ENCODE measurements at regions of chr12 and their contacts with region 1.

Region 1: DNA sequence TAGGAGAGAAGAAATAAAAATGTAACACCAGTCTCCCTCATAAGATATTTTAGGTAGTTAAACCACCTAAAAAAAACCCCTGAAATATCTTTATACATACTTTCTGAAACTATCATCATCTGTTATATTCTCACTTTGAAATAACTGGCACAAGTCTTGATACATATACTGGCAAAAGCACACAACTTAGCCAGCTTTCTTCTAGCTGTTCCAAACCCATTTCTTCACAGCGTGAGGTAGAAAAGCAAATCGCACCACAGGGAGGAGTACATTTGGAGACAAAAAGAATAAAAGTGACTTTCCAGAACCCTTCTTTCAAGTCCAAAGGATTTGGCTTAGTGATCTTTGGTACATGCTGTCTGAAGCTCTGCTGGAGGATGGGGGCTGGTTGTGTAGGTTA is 78.5 kb downstream of the RERG start:
- DNase-seq: no peak
- H3K4me3 ChIP-seq: no peak overlapping the region
- H3K27ac ChIP-seq: no peak overlapping the region
- H3K4me1 ChIP-seq: no peaks in the 10 kb centered on the region
- H3K27me3 ChIP-seq: no peaks in the 10 kb centered on the region
- CTCF ChIP-seq: no peak

Region 2: GRCh38 chr12:14989790-14990189 is 152.9 kb before region 1 on chr12:
- CTCF ChIA-PET with region 1: no interaction called
- POLR2A ChIA-PET with region 1: no interaction called
- intact Hi-C with region 1: no loop called
- DNase-seq: no peak
- H3K4me3 ChIP-seq: no peak overlapping the region
- H3K27ac ChIP-seq: no peak overlapping the region
- H3K4me1 ChIP-seq: no peaks in the 10 kb centered on the region
- H3K27me3 ChIP-seq: no peaks in the 10 kb centered on the region
- CTCF ChIP-seq: no peak

Region 3: DNA sequence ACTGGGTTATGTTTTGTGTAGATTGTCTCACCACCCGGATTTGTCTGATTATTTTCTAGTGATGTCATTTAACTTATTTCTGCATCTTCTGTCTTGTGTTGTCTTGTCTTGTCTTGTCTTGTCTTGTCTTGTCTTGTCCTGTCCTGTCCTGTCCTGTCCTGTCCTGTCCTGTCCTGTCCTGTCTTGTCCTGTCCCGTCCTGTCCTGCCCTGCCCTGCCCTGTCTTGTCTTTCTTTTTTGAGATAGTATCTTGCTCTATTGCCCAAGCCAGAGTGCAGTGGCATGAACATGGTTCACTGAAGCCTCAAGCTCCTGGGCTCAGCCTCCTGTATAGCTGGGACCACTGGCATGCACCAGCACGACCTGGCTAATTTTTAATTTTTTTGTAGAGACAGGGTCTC is 794.0 kb after region 1 on chr12:
- CTCF ChIA-PET with region 1: no interaction called
- POLR2A ChIA-PET with region 1: interaction called, 10 read pairs
- intact Hi-C with region 1: no loop called
- DNase-seq: no peak
- H3K4me3 ChIP-seq: no peak overlapping the region
- H3K27ac ChIP-seq: no peak overlapping the region
- H3K4me1 ChIP-seq: peaks cover 5% of the 10 kb centered on the region
- H3K27me3 ChIP-seq: no peaks in the 10 kb centered on the region
- CTCF ChIP-seq: no peak